Heart right ventricle (tissue), 16 donors: ENCODE measurements at regions of chr11 and their contacts with region 1.

Region 1: GRCh38 chr11:6603287-6604080 is at the starts of genes ILK and RRP8:
- DNase-seq: peak; percentile 92 to 93
- ATAC-seq: peak; percentile 85 to 94 (median 92)
- H3K4me3 ChIP-seq: peak within 1 kb of the TSS; percentile 63 to 97 (median 82)
- H3K27ac ChIP-seq: peak within 1 kb of the TSS; percentile 93 to 99 (median 97)
- H3K4me1 ChIP-seq: peaks cover 15 to 80% (median 69%) of the 10 kb centered on the region in 9 donors
- H3K27me3 ChIP-seq: no peaks in the 10 kb centered on the region
- CTCF ChIP-seq: peak in 6 of 9 donors; percentile 13 to 64 (median 43)
- total RNA-seq, gene ILK: 150 to 247 (median 204) TPM
- total RNA-seq, gene RRP8: 12.1 to 23.3 (median 20.5) TPM

Region 2: DNA sequence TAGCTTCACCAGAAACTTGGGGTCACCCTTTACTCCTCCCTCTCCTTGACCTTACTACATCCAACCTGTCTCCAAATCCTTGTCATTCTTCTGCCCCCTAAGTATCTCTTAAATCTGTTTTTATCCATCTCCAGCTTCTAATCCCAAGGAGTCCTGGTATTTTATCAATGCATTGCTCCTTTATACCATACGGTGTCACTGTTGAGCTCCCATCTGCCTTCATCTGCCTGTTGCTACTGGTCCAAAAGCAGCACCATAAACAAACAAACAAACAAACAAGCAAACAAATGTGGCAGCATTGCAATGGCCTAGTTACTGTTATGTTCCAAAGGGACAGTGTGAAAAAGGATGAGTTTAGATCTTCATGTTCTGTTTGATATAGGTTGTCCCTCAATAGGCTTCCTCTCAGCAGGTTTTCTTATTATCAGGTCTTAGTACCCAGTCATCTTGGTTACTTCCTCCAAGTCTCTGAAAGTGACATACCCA is 72.2 kb before region 1 on chr11:
- intact Hi-C with region 1: loop called in 4 of 10 experiments (anchors 5 to 10 kb)
- DNase-seq: peak in 1 of 2 donors; percentile 38
- ATAC-seq: peak in 5 of 8 donors; percentile 47 to 75 (median 67)
- H3K4me3 ChIP-seq: no peak overlapping the region
- H3K27ac ChIP-seq: no peak overlapping the region
- H3K4me1 ChIP-seq: no peaks in the 10 kb centered on the region
- H3K27me3 ChIP-seq: no peaks in the 10 kb centered on the region
- CTCF ChIP-seq: peak; percentile 55 to 88 (median 79)

Region 3: DNA sequence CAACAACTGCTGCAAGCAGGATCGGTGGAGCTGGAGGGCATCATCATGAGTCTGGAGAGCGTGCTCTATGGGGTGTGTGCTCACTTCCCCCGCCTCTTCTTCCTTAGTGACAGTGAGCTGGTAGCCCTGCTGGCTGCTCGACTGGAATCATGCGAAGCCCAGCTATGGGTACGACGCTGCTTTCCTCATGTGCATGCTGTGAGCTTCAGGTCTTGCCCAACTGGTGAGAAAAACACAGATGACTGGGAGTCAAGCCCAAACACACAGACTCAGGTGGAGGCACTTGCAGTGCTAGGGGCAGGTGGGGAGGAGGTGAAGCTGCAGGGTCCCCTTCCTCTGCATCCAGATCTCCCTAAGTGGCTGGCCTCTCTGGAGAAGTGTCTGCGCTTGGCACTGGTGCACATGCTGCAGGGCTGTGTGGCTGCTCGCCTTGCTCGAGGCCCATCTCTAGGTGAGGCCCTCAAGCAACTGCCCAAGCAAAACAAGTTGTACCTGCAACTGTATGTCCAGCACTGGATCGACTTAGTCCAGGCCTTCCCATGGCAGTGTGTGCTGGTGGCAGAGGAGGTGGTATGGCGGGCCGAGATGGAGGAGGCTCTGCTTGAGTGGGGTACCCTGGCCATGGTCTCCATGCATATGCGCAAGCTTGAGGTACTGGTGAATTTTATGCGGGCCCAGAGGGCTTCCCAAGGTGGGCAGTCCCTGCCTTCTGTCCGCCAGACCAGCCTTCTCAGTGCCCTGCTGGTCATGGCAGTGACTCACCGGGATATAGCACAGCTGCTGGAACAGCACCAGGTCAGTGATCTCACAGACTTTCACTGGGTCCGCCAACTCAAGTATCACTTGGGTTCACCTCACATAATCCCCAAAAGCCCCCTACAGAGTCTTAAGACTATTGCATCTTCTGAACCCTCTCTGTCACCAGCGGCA is 58.3 kb before region 1 on chr11:
- intact Hi-C with region 1: loop called in 1 of 10 experiments (anchors 5 kb)
- DNase-seq: no peak
- ATAC-seq: peak in 6 of 8 donors; percentile 6 to 37 (median 20)
- H3K4me3 ChIP-seq: no peak overlapping the region
- H3K27ac ChIP-seq: peak overlapping the region in 1 of 10 donors; percentile 38
- H3K4me1 ChIP-seq: peaks cover 0 to 21% (median 0%) of the 10 kb centered on the region in 9 donors
- H3K27me3 ChIP-seq: no peaks in the 10 kb centered on the region
- CTCF ChIP-seq: no peak

Region 4: GRCh38 chr11:6667733-6668374 is 64.4 kb after region 1 on chr11:
- intact Hi-C with region 1: loop called in 1 of 10 experiments (anchors 5 kb)
- DNase-seq: peak in 1 of 2 donors; percentile 24
- ATAC-seq: peak in 5 of 8 donors; percentile 33 to 52 (median 41)
- H3K4me3 ChIP-seq: no peak overlapping the region
- H3K27ac ChIP-seq: no peak overlapping the region
- H3K4me1 ChIP-seq: peaks cover 0 to 22% (median 5%) of the 10 kb centered on the region in 9 donors
- H3K27me3 ChIP-seq: no peaks in the 10 kb centered on the region
- CTCF ChIP-seq: peak; percentile 16 to 65 (median 57)

Region 5: DNA sequence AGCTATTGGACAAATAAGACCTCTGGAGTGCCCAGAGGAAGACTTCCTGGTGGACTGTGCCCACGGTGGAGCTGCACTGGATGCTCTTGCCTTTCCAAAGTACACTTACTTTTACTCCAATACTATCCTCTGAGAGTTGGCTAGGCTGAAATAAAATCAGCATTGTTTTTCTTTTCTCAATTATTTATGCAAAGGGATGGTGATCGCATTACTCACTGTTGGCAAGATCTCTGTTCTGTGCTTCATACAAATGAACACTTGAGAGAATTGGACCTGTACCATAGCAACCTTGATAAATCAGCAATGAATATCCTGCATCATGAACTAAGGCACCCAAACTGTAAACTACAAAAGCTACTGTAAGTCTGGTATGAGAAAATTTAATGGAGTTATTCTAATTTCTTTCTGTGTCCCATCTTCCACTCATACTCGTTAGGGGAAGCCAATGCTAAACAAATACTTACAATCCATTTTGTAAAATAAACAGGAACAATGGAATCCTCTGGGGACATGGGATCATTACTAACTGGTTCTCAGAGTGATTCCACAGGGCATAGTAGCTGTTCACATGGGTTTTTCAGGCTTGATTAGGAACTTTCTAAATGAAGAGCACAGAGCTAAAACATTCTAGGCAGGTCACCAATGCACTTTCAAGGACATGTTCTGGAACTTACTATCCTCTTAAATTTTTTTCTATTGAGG is 443.1 kb after region 1 on chr11:
- intact Hi-C with region 1: no loop called
- DNase-seq: no peak
- ATAC-seq: no peak
- H3K4me3 ChIP-seq: no peak overlapping the region
- H3K27ac ChIP-seq: no peak overlapping the region
- H3K4me1 ChIP-seq: no peaks in the 10 kb centered on the region
- H3K27me3 ChIP-seq: no peaks in the 10 kb centered on the region
- CTCF ChIP-seq: no peak